KBM-7 (cell line): ENCODE measurements at regions of chr21 and their contacts with region 1.

Region 1: DNA sequence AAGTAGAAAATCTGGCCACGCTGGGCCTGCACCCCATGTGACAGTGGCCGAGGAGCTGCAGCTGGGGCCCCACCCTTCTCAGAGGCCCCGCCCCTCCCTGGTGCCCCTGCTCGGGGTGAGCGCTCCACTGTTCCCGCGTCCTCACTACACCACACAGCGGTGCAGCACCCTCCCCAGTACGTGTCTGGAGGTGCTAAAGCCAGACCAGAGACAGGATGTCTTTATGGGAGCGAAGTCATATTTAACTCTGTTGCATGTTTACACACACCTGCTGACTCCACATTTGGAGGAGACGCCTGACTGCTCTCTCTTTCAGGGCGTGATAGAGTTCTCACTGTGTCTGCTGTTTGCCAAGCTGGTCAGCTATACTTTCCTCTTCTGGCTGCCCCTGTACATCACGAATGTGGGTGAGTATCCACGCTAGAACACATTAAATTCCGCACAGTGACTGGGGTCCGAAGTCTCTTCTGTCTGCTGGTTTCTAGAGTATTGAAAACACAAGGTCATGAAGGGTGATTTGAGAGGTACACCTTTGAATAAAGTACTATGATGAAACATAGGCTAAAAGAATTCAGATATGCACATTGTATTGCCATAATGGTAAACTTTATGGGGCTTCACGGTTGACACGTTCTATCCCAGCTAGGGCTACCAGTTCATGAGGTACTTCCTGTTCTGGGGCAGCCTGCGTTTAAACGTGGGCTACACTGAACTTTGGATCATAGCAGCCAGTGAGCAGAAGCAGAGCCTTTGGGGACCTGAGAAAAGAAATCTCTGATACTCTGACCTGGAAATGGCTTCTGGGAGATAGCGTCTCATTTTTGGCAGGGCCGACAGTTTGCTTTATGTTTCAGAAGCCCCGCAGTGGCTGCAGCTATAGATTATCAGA is 48.4 kb downstream of the SLC37A1 start:
- DNase-seq: no peak

Region 2: DNA sequence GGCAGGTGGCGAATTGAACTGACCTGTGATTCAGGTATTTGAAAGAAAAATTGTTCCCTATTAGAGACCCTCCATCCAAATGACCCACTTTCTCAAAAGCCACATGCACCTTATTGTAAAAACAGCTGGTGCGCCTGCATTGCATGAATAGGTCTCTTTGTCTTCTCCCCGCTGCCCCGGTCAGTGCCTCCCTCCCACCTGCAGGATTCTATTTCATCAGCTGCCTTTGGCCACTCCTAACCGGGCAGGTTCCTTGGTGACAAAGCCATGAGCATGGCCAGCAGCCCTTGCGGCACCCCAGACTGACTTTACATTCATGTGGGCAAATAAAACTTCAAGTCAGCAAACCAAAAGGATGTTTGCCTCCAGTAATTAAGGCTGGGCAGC is 172.6 kb before region 1 on chr21:
- in situ Hi-C with region 1: no loop called
- DNase-seq: no peak

Region 3: DNA sequence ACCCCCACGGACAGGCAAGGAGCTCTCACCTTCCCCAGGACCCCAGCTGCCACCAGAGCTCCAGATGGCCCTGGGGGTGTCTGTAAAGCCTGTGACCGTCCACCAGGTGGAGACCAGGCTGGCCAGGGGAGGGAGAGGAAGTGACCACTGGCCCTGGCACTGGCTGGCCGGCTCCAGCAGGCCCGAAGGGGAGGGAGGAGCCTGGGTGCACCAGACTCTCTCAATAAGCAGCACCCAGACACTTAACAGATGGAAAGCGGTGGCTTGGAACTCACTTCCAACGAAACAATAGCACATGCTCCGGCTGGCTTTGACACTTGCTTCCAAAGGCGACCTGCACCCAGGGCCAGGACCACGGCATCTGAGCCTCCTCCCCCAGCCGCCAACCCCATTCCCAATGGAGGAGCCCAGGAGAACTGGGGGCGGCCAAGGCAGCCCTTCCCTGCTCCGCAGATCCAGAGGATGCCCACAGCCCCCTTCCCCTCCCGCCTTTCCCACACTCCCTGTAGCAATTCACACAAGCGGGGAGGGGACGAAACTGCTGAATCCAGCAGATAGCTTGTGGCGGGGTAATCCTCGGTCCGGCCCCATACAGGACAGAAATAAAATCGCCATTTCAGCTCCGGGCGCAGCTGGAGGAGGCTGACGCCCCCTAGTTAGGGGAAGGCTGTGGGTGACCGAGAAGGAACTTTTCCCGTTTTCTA is 90.7 kb after region 1 on chr21:
- in situ Hi-C with region 1: loop called (anchors 25 kb)
- DNase-seq: no peak